ENCODE measurements at regions of chr11 and their contacts with region 1.

Region 1: DNA sequence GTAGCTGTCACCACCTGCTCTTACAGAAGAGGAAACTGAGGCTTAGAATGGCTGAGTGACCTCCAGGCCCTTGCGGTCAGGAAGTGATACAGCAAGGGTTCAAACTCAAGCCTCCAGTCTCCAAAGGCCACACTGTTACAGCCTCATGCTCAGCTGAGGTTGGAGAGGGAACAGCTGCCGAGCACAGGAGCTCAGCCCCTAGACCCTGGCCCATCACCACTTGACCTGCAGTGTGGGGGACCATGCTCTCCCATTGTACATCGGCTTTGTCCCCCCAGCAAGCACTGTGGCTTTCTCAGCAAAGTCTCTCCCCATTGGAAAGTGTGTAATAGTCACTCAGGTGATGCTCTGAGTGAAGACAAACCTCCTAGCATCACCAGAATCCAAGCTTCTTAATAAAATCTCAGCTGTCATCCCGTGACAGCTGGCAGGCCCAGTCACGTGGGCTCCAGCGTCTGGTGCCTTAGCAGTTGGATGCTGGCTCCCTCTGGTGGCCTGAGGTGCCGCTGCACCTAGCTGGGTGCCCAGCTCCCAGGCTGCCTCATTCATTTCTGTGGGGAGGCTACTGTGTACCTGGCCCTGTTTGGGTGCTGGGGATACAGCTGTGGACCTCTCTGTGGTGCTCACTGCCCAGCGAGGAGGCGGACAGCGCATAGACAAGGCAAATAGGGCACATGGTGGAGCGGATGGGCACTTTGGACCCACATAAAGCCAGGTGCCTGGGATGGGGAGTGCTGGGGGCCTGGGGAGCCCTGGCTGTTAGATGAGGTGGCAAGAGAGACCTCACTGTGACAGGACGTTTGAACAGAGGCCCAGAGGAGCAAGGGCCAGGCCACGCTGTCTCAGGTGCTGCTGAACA is 19.1 kb upstream of the MYRF start:
- DNase-seq: peak; percentile 94
- ATAC-seq: peak; percentile 96

Region 2: DNA sequence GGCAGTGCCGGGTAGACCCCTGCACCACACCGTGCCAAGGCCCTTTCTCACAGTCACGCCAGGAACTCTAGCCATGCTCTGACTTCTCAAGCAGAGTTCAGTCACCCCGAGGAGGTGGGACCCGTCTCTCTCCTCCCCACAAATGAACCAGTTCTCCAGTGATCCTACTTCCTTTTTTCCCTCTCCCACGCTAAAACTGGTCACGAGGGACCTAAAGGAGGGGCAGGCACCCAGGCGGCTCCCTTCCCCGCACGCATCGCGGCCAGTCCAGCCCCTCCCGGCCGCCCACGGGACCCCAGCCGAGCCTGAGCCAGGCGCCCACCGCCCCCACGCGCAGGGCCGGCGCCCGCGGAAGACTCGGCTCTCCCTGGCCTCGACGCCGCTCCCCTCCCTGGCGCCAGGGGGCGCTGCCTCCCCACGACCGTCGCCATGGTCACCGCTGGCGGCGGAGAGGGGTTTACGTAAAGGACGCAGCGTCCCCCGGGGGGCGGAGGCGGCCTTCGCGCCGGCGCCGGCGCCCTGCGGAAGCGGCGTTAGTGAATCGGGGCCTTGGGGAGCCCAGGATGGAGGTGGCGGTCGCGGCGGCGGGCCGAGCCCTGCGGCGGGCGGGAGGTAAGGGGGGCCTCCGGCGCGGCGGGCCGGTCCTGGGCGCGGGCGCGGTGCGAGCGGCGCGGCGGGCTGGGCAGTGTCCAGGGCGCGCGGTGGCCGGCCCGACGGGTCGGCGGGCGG is 53.3 kb before region 1 on chr11 and contains the start of gene DAGLA:
- intact Hi-C with region 1: loop called (anchors 1 kb)
- DNase-seq: peak; percentile 84
- ATAC-seq: peak; percentile 92
- total RNA-seq, gene DAGLA: 4.2 TPM